Endothelial cell of umbilical vein (primary cell): ENCODE measurements at regions of chr17 and their contacts with region 1.

Region 1: GRCh38 chr17:64420143-64420971 is 28.6 kb upstream of the MILR1 start:
- DNase-seq: peak; percentile 76
- H3K4me3 ChIP-seq: no peak overlapping the region
- H3K27ac ChIP-seq: no peak overlapping the region
- H3K4me1 ChIP-seq: peaks cover 6% of the 10 kb centered on the region
- H3K27me3 ChIP-seq: no peaks in the 10 kb centered on the region
- CTCF ChIP-seq: peak; percentile 74 to 75
- POLR2A ChIP-seq: no peak

Region 2: GRCh38 chr17:64281962-64282727 is 138.2 kb before region 1 on chr17:
- CTCF ChIA-PET with region 1: interaction called, 19 read pairs
- POLR2A ChIA-PET with region 1: no interaction called
- dilution Hi-C with region 1: no loop called
- intact Hi-C with region 1: no loop called
- DNase-seq: peak; percentile 87
- H3K4me3 ChIP-seq: no peak overlapping the region
- H3K27ac ChIP-seq: no peak overlapping the region
- H3K4me1 ChIP-seq: peaks cover 17% of the 10 kb centered on the region
- H3K27me3 ChIP-seq: no peaks in the 10 kb centered on the region
- CTCF ChIP-seq: peak; percentile 58 to 61
- POLR2A ChIP-seq: no peak

Region 3: GRCh38 chr17:64326395-64327054 is 93.8 kb before region 1 on chr17:
- CTCF ChIA-PET with region 1: interaction called, 32 read pairs
- POLR2A ChIA-PET with region 1: no interaction called
- dilution Hi-C with region 1: no loop called
- intact Hi-C with region 1: loop called (anchors 1 kb)
- DNase-seq: peak; percentile 77
- H3K4me3 ChIP-seq: no peak overlapping the region
- H3K27ac ChIP-seq: peak overlapping the region; percentile 95
- H3K4me1 ChIP-seq: peaks cover 57% of the 10 kb centered on the region
- H3K27me3 ChIP-seq: no peaks in the 10 kb centered on the region
- CTCF ChIP-seq: no peak
- POLR2A ChIP-seq: peak; percentile 45

Region 4: DNA sequence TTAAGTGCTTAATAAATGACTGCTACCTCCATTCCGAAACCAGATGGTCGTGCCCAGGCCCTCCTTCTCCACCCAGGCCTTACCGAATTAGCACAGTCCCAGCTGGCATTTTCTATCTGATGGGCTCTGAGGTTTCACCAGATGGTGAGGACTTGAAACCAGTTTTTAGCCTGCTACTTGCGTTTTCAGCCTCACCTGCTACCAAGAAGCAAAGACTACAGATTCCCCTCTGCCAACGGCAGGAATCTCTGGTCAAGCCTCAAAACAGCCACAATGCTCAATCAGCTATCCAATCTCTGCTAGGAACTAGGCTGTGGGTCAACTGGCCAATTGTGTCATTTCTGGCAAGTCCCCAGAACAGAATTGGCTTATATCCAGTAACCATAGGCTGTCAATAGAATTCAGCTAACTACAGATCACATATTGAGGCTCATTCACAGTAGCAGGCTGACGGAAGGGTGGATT is 41.4 kb before region 1 on chr17:
- CTCF ChIA-PET with region 1: interaction called, 60 read pairs
- POLR2A ChIA-PET with region 1: interaction called, 3 read pairs
- dilution Hi-C with region 1: no loop called
- intact Hi-C with region 1: loop called (anchors 1 kb)
- DNase-seq: peak; percentile 83
- H3K4me3 ChIP-seq: no peak overlapping the region
- H3K27ac ChIP-seq: peak overlapping the region; percentile 31
- H3K4me1 ChIP-seq: peaks cover 54% of the 10 kb centered on the region
- H3K27me3 ChIP-seq: no peaks in the 10 kb centered on the region
- CTCF ChIP-seq: no peak
- POLR2A ChIP-seq: peak; percentile 59

Region 5: GRCh38 chr17:64460955-64461354 is 40.6 kb after region 1 on chr17:
- CTCF ChIA-PET with region 1: interaction called, 3 read pairs
- POLR2A ChIA-PET with region 1: no interaction called
- dilution Hi-C with region 1: no loop called
- intact Hi-C with region 1: loop called (anchors 5 kb)
- DNase-seq: peak; percentile 70
- H3K4me3 ChIP-seq: no peak overlapping the region
- H3K27ac ChIP-seq: no peak overlapping the region
- H3K4me1 ChIP-seq: peaks cover 14% of the 10 kb centered on the region
- H3K27me3 ChIP-seq: no peaks in the 10 kb centered on the region
- CTCF ChIP-seq: no peak
- POLR2A ChIP-seq: no peak

Region 6: GRCh38 chr17:64506576-64507477 is 86.5 kb after region 1 on chr17 and contains the start of gene CEP95:
- CTCF ChIA-PET with region 1: interaction called, 29 read pairs
- POLR2A ChIA-PET with region 1: interaction called, 5 read pairs
- dilution Hi-C with region 1: no loop called
- intact Hi-C with region 1: no loop called
- DNase-seq: peak; percentile 96
- H3K4me3 ChIP-seq: peak within 1 kb of the TSS; percentile 65 to 97 (median 95)
- H3K27ac ChIP-seq: peak within 1 kb of the TSS; percentile 98
- H3K4me1 ChIP-seq: peaks cover 34% of the 10 kb centered on the region
- H3K27me3 ChIP-seq: no peaks in the 10 kb centered on the region
- CTCF ChIP-seq: no peak
- POLR2A ChIP-seq: peak; percentile 65
- total RNA-seq, gene CEP95: 35.5 and 42.6 TPM in 2 replicates

Region 7: DNA sequence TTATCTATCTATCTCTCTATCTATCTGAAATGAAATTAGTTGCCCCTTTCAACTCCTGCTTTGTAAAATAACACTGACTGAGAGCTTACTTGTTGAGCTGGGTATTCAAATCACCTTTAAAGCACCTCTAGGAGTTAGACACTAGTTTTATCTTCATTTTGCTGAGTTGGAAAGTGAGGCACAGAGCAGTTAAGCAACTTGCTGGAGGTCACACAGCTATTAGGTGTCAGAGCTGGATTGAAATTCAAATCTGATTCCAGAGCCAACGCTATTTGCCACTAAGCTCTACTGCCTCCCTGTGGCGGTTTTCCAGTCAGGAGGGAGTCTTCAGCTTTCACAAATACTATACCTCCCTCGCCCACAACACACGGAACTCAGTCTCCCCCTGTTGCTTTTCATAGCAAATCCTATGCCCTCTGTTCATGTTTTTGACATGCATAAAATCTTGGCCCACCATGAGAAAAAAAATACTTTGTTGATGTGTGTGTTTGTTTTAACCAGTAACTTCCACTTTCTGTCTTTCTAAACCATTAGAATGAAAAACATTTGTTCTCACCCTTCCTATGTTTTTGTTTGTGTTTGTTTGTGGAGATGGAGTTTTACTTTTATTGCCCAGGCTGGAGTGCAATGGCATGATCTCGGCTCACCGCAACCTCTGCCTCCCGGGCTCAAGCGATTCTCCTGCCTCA is 316.6 kb after region 1 on chr17:
- CTCF ChIA-PET with region 1: no interaction called
- POLR2A ChIA-PET with region 1: no interaction called
- dilution Hi-C with region 1: no loop called
- intact Hi-C with region 1: no loop called
- DNase-seq: peak; percentile 75
- H3K4me3 ChIP-seq: no peak overlapping the region
- H3K27ac ChIP-seq: no peak overlapping the region
- H3K4me1 ChIP-seq: peaks cover 42% of the 10 kb centered on the region
- H3K27me3 ChIP-seq: no peaks in the 10 kb centered on the region
- CTCF ChIP-seq: peak; percentile 66 to 71
- POLR2A ChIP-seq: no peak